ENCODE measurements at regions of chr3 and their contacts with region 1.

Region 1: DNA sequence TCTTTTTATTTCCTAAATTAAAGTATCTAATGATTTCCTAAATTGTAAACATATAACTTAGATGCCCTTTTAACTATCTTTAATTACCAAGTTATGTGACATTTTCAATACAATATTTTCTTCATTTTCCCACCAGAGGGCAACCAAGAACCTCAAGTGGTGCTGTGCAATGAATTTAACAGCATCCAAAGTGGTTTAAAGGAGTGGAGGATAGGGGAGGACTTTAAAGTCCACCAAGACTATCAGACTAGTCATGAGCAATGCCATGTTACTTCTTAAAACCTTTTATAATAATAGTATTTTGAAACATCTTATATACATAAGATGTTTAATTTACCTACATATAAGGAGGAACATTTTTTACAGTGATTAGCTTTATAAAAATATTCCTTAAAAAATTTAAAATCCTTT is 74.4 kb downstream of the DLG1 start:
- DNase-seq: peak; percentile 69
- H3K4me3 Mint-ChIP-seq: no peak overlapping the region
- H3K27ac Mint-ChIP-seq: no peak overlapping the region
- H3K4me1 Mint-ChIP-seq: peaks cover 11% of the 10 kb centered on the region
- H3K27me3 Mint-ChIP-seq: no peaks in the 10 kb centered on the region

Region 2: DNA sequence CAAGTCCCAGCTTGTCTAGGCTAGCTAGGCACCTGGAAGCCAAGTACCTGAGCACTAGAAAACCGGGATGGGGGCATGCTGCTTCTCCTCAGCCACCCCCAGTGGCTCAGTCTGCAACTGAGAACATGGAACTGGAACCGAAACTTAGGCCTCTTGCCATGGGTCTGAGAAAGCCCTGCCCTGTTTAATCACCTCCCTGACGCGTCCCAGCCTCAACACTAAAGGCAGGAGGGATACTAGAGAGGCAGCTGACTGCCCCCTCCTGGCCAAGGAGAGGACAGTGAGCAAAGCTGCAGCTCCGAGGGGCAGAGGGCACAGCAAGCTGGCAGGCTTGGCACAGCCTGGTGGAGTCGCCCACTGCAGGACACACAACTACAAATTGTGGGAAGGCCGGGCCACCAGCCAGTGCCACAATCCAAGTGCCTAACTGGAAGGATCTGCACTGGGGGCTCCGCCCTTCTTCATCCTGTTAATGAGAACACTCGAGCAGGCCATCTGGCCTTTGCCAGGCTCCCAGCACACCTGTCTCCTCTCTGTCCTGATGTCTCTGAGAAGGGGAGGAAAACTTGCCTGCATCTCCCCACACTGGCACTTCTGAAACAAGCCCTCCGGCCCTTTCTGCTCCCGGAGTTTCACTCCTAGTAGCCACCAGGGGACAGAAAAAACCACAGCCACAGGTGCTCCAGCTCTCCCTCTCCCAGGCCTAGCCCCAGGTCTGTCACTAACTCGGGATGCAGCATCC is 278.0 kb after region 1 on chr3:
- intact Hi-C with region 1: loop called (anchors 1 kb)
- DNase-seq: peak; percentile 81
- H3K4me3 Mint-ChIP-seq: no peak overlapping the region
- H3K27ac Mint-ChIP-seq: no peak overlapping the region
- H3K4me1 Mint-ChIP-seq: no peaks in the 10 kb centered on the region
- H3K27me3 Mint-ChIP-seq: no peaks in the 10 kb centered on the region